OCI-LY7 (cell line): ENCODE measurements at regions of chr9 and their contacts with region 1.

Region 1: DNA sequence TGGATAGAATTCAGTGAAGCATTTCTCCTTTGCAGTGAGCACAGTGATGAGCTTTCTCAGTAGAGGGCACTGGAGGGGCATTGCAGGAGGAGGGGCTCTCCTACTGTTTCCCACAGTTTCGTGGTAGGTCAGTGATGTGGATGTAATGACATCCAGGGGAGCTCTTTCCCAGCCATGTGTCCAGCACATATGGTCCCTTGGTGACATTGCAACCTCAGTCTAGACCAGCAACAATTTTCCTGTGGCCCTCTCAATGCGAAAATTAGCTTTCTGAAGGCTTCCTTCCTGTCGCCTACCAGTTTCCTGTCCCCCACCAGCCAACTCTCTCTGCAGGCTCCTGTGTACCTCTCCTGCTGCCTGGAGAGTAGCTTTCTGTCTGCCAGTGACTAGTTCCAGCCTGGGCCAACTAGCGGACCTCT is 6.9 kb upstream of the PDCL start:
- DNase-seq: peak; percentile 47
- H3K4me3 ChIP-seq: peak overlapping the region; percentile 38
- H3K27ac ChIP-seq: no peak overlapping the region
- H3K4me1 ChIP-seq: peaks cover 11% of the 10 kb centered on the region
- CTCF ChIP-seq: peak; percentile 76

Region 2: GRCh38 chr9:122446819-122447484 is 388.4 kb before region 1 on chr9:
- CTCF ChIA-PET with region 1: no interaction called
- POLR2A ChIA-PET with region 1: no interaction called
- intact Hi-C with region 1: no loop called
- DNase-seq: no peak
- H3K4me3 ChIP-seq: no peak overlapping the region
- H3K27ac ChIP-seq: no peak overlapping the region
- H3K4me1 ChIP-seq: no peaks in the 10 kb centered on the region
- CTCF ChIP-seq: no peak

Region 3: GRCh38 chr9:122506964-122507363 is 328.4 kb before region 1 on chr9:
- CTCF ChIA-PET with region 1: no interaction called
- POLR2A ChIA-PET with region 1: no interaction called
- intact Hi-C with region 1: no loop called
- DNase-seq: no peak
- H3K4me3 ChIP-seq: no peak overlapping the region
- H3K27ac ChIP-seq: no peak overlapping the region
- H3K4me1 ChIP-seq: no peaks in the 10 kb centered on the region
- CTCF ChIP-seq: no peak

Region 4: DNA sequence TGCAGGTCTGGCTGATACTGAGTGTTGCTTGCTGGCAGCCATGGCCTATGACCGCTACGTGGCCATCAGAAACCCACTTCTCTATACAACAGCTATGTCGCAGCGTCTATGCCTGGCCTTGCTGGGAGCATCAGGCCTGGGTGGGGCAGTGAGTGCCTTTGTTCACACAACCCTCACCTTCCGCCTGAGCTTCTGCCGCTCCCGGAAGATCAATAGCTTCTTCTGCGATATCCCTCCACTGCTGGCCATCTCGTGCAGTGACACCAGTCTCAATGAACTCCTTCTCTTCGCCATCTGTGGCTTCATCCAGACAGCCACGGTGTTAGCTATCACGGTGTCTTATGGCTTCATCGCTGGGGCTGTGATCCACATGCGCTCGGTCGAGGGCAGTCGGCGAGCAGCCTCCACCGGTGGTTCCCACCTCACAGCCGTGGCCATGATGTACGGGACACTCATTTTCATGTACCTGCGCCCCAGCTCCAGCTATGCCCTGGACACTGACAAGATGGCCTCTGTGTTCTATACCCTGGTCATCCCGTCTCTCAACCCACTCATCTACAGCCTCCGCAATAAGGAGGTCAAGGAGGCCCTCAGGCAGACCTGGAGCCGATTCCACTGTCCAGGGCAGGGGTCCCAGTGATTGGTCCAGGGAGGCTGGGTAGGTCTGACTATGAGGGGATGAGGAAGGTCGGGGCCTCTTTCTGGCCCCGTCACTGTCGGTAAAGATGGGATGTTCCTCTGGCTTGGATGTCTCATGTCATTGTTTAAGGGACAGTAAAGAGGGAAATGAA is 45.9 kb before region 1 on chr9:
- CTCF ChIA-PET with region 1: no interaction called
- POLR2A ChIA-PET with region 1: no interaction called
- intact Hi-C with region 1: no loop called
- DNase-seq: no peak
- H3K4me3 ChIP-seq: no peak overlapping the region
- H3K27ac ChIP-seq: no peak overlapping the region
- H3K4me1 ChIP-seq: no peaks in the 10 kb centered on the region
- CTCF ChIP-seq: no peak

Region 5: GRCh38 chr9:122940603-122941559 is 105.6 kb after region 1 on chr9 and contains the start of gene RABGAP1:
- CTCF ChIA-PET with region 1: no interaction called
- POLR2A ChIA-PET with region 1: interaction called, 10 read pairs
- intact Hi-C with region 1: no loop called
- DNase-seq: peak; percentile 99
- H3K4me3 ChIP-seq: peak within 1 kb of the TSS; percentile 92
- H3K27ac ChIP-seq: peak within 1 kb of the TSS; percentile 54
- H3K4me1 ChIP-seq: peaks cover 32% of the 10 kb centered on the region
- CTCF ChIP-seq: no peak
- total RNA-seq, gene RABGAP1: 16.8 and 24.2 TPM in 2 replicates

Region 6: GRCh38 chr9:122991370-122991830 is 156.1 kb after region 1 on chr9:
- CTCF ChIA-PET with region 1: interaction called, 3 read pairs
- POLR2A ChIA-PET with region 1: no interaction called
- intact Hi-C with region 1: loop called (anchors 5 kb)
- DNase-seq: peak; percentile 51
- H3K4me3 ChIP-seq: no peak overlapping the region
- H3K27ac ChIP-seq: no peak overlapping the region
- H3K4me1 ChIP-seq: no peaks in the 10 kb centered on the region
- CTCF ChIP-seq: peak; percentile 95

Region 7: DNA sequence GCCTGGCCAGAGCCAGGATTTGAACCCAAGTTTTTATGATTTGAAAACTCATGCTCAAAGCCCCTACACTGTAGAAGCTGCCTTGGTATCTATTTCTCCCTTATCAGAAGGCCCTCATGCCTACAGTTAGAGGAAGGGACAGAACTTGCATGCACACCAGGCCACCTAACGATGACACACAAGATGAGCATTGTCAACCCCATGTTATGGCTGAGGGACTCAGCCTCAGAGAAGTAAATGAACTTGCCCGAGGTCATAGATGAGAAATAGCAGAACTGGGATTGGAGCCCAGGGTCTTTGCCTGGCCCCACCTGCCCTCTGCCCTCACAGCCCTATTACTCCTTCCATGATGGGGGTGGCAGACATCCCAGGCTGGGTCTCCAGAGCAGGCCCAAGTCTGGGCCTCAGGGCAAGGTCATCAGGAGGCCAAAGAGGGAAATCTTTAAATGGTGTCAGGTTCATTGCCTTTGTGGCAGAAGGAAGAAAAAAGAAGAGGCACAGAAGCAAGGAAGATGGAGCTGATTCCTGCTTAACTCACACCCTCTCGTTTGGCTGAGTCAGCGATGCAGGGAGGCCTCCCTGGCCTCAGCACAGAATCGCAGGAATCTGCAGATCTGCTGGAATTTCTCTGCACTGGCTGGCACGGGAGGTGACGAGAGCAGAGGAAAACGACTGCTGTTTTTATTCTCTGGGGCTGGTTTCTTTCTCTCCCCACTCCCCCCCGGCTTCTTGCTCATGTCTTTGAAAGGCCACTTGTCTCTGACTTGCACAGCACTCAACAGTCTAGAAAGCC is 500.1 kb after region 1 on chr9:
- CTCF ChIA-PET with region 1: no interaction called
- POLR2A ChIA-PET with region 1: no interaction called
- intact Hi-C with region 1: no loop called
- DNase-seq: peak; percentile 45
- H3K4me3 ChIP-seq: no peak overlapping the region
- H3K27ac ChIP-seq: peak overlapping the region; percentile 22
- H3K4me1 ChIP-seq: peaks cover 61% of the 10 kb centered on the region
- CTCF ChIP-seq: no peak